MCF 10A (cell line): ENCODE measurements at regions of chr5 and their contacts with region 1.

Region 1: DNA sequence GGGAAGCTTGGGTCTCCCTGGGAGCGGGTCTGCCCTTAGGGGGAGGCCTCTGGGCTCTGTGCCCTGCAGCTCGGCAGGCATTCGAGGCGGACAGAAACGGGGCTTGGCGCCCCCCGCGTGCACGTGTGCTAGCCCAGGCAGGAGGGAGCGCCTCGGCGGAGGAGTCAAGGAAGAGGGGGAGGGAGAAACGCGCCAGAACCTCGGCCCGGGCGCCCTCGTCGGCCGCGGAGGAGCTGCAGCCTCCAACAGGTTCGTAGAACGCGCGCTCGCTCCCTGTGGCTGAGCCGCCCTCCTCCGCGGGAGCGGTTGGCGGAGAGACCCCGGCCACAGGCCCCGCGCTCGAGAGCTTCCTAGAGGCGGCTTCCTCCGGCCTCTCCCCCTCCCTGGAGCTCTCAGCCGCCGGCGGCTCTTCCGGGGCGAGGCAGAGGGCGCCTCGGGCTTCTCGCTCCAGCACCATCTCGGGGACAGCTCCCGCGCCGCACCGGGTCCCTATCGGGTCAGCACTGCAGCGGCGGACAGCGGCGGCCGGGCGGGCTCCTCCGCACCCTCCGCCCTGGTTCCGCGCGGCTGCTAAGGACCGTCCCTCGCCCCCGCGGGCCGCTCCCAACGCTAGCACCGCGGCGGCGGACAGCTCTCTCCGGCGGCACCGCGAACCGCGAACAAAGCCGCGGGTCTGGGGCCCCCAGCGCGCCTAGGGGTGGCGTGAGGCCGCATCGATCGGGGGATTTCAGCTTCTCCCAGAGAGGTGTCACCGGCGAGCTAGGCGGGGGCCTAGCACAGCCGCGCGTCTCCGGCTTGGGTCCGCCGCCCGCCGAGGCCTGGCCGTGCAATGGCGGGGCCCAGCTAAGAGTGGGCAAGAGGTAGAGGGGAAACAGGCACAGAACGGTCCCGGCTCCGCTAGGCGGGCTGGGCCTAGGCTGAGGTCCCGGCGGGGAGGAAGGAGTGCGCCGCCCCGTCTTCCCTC is 74.6 kb upstream of the CPLX2 start:
- DNase-seq: peak; percentile 89
- H3K4me3 Mint-ChIP-seq: no peak overlapping the region
- H3K27ac Mint-ChIP-seq: no peak overlapping the region
- H3K4me1 Mint-ChIP-seq: peaks cover 6% of the 10 kb centered on the region
- H3K27me3 Mint-ChIP-seq: peaks cover 60% of the 10 kb centered on the region
- CTCF ChIP-seq: no peak

Region 2: DNA sequence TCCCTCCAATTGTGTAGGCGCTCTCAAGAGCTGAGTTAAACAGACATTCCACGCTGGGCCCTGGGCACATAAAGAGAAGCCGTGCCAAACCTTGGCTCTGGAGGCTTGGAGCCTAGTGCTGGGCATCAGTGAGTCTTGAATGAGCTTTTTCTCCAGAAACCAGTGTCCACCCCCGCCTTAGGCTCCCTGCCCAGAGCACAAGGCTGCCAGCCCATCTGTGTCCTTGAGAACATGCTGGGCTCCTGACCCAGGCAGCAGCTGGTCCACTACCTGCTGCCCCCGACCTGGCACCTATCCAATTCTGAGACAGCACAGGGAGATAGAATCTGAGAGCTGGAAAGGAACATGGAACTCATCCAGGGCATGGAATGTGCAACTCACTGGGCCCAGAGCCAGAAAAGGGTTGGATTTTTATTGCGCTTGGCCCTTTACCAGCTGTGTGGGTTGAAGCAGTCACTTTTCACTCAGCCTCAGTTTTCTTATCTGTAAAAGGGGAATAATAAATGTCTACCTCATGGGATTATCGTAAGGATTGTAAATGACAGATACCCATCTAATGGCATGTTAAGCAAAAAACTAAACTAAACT is 17.8 kb before region 1 on chr5:
- CTCF ChIA-PET with region 1: no interaction called
- POLR2A ChIA-PET with region 1: interaction called, 17 read pairs
- intact Hi-C with region 1: loop called (anchors 1 kb)
- DNase-seq: peak; percentile 99
- H3K4me3 Mint-ChIP-seq: no peak overlapping the region
- H3K27ac Mint-ChIP-seq: no peak overlapping the region
- H3K4me1 Mint-ChIP-seq: peaks cover 18% of the 10 kb centered on the region
- H3K27me3 Mint-ChIP-seq: peaks cover 21% of the 10 kb centered on the region
- CTCF ChIP-seq: no peak

Region 3: GRCh38 chr5:175814691-175815090 is 17.9 kb after region 1 on chr5:
- CTCF ChIA-PET with region 1: interaction called, 6 read pairs
- POLR2A ChIA-PET with region 1: interaction called, 7 read pairs
- intact Hi-C with region 1: loop called (anchors 2 kb)
- DNase-seq: peak; percentile 95
- H3K4me3 Mint-ChIP-seq: no peak overlapping the region
- H3K27ac Mint-ChIP-seq: peak overlapping the region; percentile 81
- H3K4me1 Mint-ChIP-seq: peaks cover 38% of the 10 kb centered on the region
- H3K27me3 Mint-ChIP-seq: no peaks in the 10 kb centered on the region
- CTCF ChIP-seq: no peak

Region 4: DNA sequence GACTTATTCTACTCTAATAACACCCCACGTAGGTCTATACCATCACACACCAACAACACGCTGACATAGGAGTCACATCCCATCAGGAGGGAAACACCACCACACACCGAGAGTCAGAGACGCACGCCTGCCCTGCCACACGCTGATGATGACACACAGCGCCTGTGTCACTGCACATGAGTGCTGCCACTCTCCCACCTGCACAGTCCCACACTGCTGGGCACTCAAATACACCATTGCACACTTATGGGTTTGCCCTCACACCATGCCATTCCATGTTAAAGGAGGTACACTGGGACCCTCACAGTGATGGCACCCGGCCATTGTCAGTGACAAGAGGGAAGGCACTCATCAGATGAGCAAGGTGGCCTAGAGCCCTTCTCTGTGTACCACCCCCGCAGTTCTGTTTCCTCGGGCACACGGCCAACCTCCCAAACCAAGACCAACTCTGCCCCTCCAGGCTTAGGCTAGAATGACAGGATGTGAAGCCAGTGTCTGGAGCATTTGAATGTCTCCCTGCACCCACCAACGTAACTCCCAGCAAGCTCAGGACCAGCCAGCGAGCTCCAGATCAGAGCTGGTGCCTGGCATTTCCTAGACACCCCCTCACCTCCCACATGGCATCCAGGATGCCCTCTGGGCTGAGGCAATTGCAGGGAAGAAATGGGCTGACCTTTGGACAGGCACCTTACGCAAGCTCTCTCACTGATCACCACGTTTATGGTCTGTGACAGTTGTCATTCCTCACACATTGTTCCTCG is 70.9 kb after region 1 on chr5:
- CTCF ChIA-PET with region 1: interaction called, 7 read pairs
- POLR2A ChIA-PET with region 1: interaction called, 4 read pairs
- intact Hi-C with region 1: loop called (anchors 1 kb)
- DNase-seq: peak; percentile 66
- H3K4me3 Mint-ChIP-seq: no peak overlapping the region
- H3K27ac Mint-ChIP-seq: no peak overlapping the region
- H3K4me1 Mint-ChIP-seq: no peaks in the 10 kb centered on the region
- H3K27me3 Mint-ChIP-seq: peaks cover 66% of the 10 kb centered on the region
- CTCF ChIP-seq: peak; percentile 48